Esophagus muscularis mucosa (tissue), 4 donors: ENCODE measurements at regions of chr15 and their contacts with region 1.

Region 1: GRCh38 chr15:64989416-64990167 is at the start of gene SPG21:
- DNase-seq: peak; percentile 96
- H3K4me3 ChIP-seq: peak within 1 kb of the TSS; percentile 79 to 96 (median 92)
- H3K27ac ChIP-seq: peak within 1 kb of the TSS; percentile 91 to 96 (median 96)
- H3K4me1 ChIP-seq: peaks cover 19 to 51% (median 43%) of the 10 kb centered on the region in 4 donors
- H3K27me3 ChIP-seq: no peaks in the 10 kb centered on the region
- CTCF ChIP-seq: peak in 1 of 3 experiments; percentile 11
- EP300 ChIP-seq: no peak
- POLR2A ChIP-seq: peak; percentile 6
- total RNA-seq, gene SPG21: 83.5 to 96.7 (median 90.8) TPM

Region 2: DNA sequence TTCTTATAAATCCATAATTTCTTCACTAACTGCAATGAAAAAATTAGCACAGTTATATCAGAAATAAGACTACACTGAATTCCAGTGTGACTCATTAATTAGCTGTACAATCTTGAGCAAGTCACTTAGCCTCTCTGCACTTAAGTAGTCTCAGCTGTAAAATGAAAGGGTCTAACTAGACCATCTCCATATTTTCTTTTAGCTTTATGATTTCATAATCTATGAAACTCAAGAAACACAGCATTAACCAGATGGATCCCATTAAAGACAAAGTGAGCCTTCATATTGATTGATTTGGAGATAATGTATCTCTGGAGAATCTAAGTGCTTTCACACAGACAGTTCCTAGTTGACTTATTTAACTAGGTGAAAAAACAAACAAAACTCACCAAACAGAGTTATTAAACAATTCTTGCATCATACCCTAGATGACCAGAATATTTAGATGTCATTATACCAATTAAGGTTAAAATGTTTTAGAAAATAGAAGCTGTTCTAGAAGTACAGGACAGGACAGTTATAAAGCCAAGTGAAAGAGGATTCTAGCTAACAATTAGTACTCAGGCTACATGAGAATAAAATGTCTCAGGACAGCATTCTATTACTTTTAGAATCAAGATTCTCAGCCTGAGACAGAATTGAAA is 644.8 kb before region 1 on chr15:
- intact Hi-C with region 1: no loop called
- DNase-seq: no peak
- H3K4me3 ChIP-seq: no peak overlapping the region
- H3K27ac ChIP-seq: no peak overlapping the region
- H3K4me1 ChIP-seq: peaks cover 4 to 21% (median 17%) of the 10 kb centered on the region in 4 donors
- H3K27me3 ChIP-seq: no peaks in the 10 kb centered on the region
- CTCF ChIP-seq: no peak
- EP300 ChIP-seq: no peak
- POLR2A ChIP-seq: no peak

Region 3: DNA sequence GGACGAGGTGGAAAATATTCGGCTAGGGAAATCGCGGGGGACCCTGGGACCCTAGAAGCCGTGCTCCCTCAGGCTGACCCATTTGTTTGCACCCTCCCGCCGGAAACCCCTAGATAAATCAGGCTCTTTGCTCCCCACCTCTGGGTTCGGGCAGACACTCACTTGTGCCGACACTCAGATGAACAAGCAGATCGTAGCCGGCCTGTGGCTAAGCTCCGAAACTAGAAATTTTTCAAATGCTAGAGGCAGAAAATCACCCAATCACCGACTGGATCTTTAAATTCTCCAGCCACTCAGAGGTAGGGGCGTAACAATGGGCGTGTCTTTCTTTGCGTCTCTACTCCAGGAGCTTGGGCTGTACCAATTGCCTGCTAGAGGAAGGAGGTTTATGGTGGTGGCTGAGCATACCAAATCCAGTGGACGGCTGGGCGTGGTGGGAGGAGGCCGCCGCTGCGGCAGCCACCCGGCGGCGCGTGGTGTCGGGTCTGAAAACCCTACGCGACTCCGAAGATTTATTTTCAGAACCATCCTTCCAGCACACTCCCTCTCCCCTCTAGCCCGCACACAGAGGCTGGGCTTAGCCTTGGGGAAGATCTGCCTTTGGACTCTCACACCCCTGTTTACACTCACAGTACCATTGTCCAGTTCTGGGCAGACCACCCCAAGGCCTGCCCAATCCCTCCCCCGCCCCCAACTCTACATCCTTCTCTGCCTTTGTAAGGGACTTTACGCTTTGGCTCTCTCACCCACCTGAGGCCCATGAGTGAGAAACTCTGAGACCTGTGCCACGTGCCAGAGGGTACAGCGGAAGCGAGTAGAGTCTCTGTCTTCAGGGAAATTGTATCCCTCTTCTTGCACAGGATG is 163.9 kb before region 1 on chr15 and contains the start of gene PIF1:
- intact Hi-C with region 1: loop called (anchors 10 kb)
- DNase-seq: peak; percentile 98
- H3K4me3 ChIP-seq: peak within 1 kb of the TSS; percentile 58 to 64 (median 61)
- H3K27ac ChIP-seq: peak within 1 kb of the TSS; percentile 69 to 82 (median 76)
- H3K4me1 ChIP-seq: peaks cover 18 to 43% (median 33%) of the 10 kb centered on the region in 4 donors
- H3K27me3 ChIP-seq: no peaks in the 10 kb centered on the region
- CTCF ChIP-seq: peak in 1 of 3 experiments; percentile 16
- EP300 ChIP-seq: no peak
- POLR2A ChIP-seq: no peak
- total RNA-seq, gene PIF1: 0.78 to 4.4 (median 2.0) TPM

Region 4: DNA sequence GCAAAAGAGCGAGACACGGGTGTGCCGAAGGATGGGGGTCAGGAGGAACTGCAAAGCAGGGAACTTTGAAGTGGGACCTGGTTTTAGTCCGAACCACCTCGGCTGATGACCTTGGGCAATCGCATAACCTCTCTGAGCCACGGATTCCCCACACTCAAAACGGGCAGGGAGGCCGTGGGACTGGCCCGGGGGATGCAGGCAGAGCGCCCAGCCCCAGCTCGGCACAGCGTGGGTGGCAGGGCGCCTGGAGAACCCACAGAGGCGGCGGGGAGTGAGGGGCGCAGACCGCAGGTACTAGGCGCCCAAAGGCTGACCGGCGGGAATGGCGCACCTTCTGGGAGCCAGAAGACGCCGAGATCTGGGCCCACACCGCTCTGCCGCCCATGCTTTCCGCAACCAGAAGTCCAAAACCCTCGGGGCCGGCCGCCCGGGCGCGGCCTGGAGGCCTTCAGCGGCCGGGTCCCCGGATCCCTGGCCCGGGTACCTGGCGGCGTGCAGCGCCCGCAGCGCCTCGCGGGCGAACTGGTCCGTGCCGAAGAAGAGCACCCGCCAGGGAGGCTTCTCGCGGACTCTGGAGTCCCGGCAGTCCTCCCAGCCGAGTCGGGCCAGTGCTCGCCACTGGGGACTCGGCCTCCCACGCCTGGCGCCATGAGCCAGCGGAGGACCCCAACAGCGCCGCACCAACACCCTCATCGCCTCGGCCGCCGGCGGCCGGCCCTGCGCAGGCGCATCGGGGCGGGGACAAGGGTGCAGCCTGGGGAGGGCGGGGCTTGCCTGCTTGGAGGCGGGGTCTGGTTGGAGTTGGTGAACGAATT is 39.5 kb after region 1 on chr15 and contains the start of gene MTFMT:
- intact Hi-C with region 1: loop called (anchors 5 kb)
- DNase-seq: peak; percentile 97
- H3K4me3 ChIP-seq: peak within 1 kb of the TSS; percentile 77 to 98 (median 89)
- H3K27ac ChIP-seq: peak within 1 kb of the TSS; percentile 75 to 89 (median 82)
- H3K4me1 ChIP-seq: peaks cover 18 to 40% (median 30%) of the 10 kb centered on the region in 4 donors
- H3K27me3 ChIP-seq: no peaks in the 10 kb centered on the region
- CTCF ChIP-seq: peak in 2 of 3 experiments; percentile 17 to 22
- EP300 ChIP-seq: no peak
- POLR2A ChIP-seq: peak; percentile 94
- total RNA-seq, gene MTFMT: 26.3 to 29.9 (median 29.4) TPM